WTC11 (cell line): ENCODE measurements at regions of chr11 and their contacts with region 1.

Region 1: GRCh38 chr11:34926101-34926830 is 9.8 kb downstream of the PDHX start:
- DNase-seq: no peak
- ATAC-seq: no peak; the same call in 1 of the 2 replicates
- H3K4me3 Mint-ChIP-seq: no peak overlapping the region
- H3K27ac Mint-ChIP-seq: no peak overlapping the region
- H3K4me1 Mint-ChIP-seq: peaks cover 26% of the 10 kb centered on the region
- H3K27me3 Mint-ChIP-seq: no peaks in the 10 kb centered on the region
- CTCF ChIP-seq: 0 out of 2 replicates have a peak, but pooled peaks have one; percentile 17

Region 2: GRCh38 chr11:35391922-35392813 is 465.9 kb after region 1 on chr11:
- CTCF ChIA-PET with region 1: interaction called, 13 read pairs
- POLR2A ChIA-PET with region 1: no interaction called
- DNase-seq: peak; percentile 92
- ATAC-seq: peak; percentile 97
- H3K4me3 Mint-ChIP-seq: no peak overlapping the region
- H3K27ac Mint-ChIP-seq: no peak overlapping the region
- H3K4me1 Mint-ChIP-seq: peaks cover 12% of the 10 kb centered on the region
- H3K27me3 Mint-ChIP-seq: no peaks in the 10 kb centered on the region
- CTCF ChIP-seq: peak; percentile 84